ENCODE measurements at regions of chr9 and their contacts with region 1.

Region 1: DNA sequence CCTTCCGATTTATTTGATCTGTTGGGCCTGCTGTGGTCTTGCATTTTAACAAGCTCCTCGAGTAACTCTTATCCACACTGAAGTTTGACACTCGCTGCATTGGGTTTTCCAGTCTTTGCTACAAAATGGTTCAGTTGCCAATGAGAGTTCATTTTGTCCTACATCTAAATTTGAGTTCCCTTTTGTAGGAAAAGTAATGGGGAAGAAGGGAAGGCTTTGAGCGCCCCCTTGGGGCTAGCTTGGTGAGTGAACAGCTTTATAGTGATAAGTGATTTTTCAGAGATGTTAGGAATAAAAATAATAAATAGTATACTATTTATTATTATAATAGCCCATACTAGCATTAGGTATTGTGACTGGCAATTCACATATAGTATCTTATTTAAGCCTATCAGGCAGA is 89.9 kb upstream of the GNAQ start:
- DNase-seq: peak; percentile 61
- H3K4me3 Mint-ChIP-seq: no peak overlapping the region
- H3K27ac Mint-ChIP-seq: no peak overlapping the region
- H3K4me1 Mint-ChIP-seq: no peaks in the 10 kb centered on the region
- H3K27me3 Mint-ChIP-seq: peaks cover 20% of the 10 kb centered on the region
- CTCF ChIP-seq: no peak

Region 2: GRCh38 chr9:77456829-77457437 is 664.6 kb before region 1 on chr9:
- CTCF ChIA-PET with region 1: no interaction called
- intact Hi-C with region 1: loop called (anchors 1 kb)
- DNase-seq: peak; percentile 80
- H3K4me3 Mint-ChIP-seq: no peak overlapping the region
- H3K27ac Mint-ChIP-seq: no peak overlapping the region
- H3K4me1 Mint-ChIP-seq: peaks cover 8% of the 10 kb centered on the region
- H3K27me3 Mint-ChIP-seq: peaks cover 28% of the 10 kb centered on the region
- CTCF ChIP-seq: peak; percentile 49

Region 3: GRCh38 chr9:77663754-77664153 is 457.7 kb before region 1 on chr9:
- CTCF ChIA-PET with region 1: no interaction called
- intact Hi-C with region 1: loop called (anchors 10 kb)
- DNase-seq: peak; percentile 64
- H3K4me3 Mint-ChIP-seq: no peak overlapping the region
- H3K27ac Mint-ChIP-seq: peak overlapping the region; percentile 19
- H3K4me1 Mint-ChIP-seq: peaks cover 27% of the 10 kb centered on the region
- H3K27me3 Mint-ChIP-seq: no peaks in the 10 kb centered on the region
- CTCF ChIP-seq: no peak

Region 4: GRCh38 chr9:77751341-77752091 is 370.0 kb before region 1 on chr9:
- CTCF ChIA-PET with region 1: interaction called, 3 read pairs
- intact Hi-C with region 1: loop called (anchors 5 kb)
- DNase-seq: peak; percentile 54
- H3K4me3 Mint-ChIP-seq: no peak overlapping the region
- H3K27ac Mint-ChIP-seq: no peak overlapping the region
- H3K4me1 Mint-ChIP-seq: peaks cover 8% of the 10 kb centered on the region
- H3K27me3 Mint-ChIP-seq: no peaks in the 10 kb centered on the region
- CTCF ChIP-seq: peak; percentile 21

Region 5: GRCh38 chr9:77841739-77842386 is 279.6 kb before region 1 on chr9:
- CTCF ChIA-PET with region 1: no interaction called
- intact Hi-C with region 1: loop called (anchors 5 kb)
- DNase-seq: no peak
- H3K4me3 Mint-ChIP-seq: no peak overlapping the region
- H3K27ac Mint-ChIP-seq: no peak overlapping the region
- H3K4me1 Mint-ChIP-seq: peaks cover 23% of the 10 kb centered on the region
- H3K27me3 Mint-ChIP-seq: no peaks in the 10 kb centered on the region
- CTCF ChIP-seq: no peak

Region 6: GRCh38 chr9:77977210-77977611 is 144.3 kb before region 1 on chr9:
- CTCF ChIA-PET with region 1: interaction called, 15 read pairs
- intact Hi-C with region 1: loop called (anchors 1 kb)
- DNase-seq: peak; percentile 54
- H3K4me3 Mint-ChIP-seq: no peak overlapping the region
- H3K27ac Mint-ChIP-seq: no peak overlapping the region
- H3K4me1 Mint-ChIP-seq: peaks cover 28% of the 10 kb centered on the region
- H3K27me3 Mint-ChIP-seq: no peaks in the 10 kb centered on the region
- CTCF ChIP-seq: no peak

Region 7: GRCh38 chr9:78035383-78035993 is 86.0 kb before region 1 on chr9:
- CTCF ChIA-PET with region 1: no interaction called
- intact Hi-C with region 1: loop called (anchors 5 kb)
- DNase-seq: peak; percentile 47
- H3K4me3 Mint-ChIP-seq: no peak overlapping the region
- H3K27ac Mint-ChIP-seq: no peak overlapping the region
- H3K4me1 Mint-ChIP-seq: peaks cover 20% of the 10 kb centered on the region
- H3K27me3 Mint-ChIP-seq: no peaks in the 10 kb centered on the region
- CTCF ChIP-seq: no peak